ENCODE measurements at regions of chr11 and their contacts with region 1.

Region 1: DNA sequence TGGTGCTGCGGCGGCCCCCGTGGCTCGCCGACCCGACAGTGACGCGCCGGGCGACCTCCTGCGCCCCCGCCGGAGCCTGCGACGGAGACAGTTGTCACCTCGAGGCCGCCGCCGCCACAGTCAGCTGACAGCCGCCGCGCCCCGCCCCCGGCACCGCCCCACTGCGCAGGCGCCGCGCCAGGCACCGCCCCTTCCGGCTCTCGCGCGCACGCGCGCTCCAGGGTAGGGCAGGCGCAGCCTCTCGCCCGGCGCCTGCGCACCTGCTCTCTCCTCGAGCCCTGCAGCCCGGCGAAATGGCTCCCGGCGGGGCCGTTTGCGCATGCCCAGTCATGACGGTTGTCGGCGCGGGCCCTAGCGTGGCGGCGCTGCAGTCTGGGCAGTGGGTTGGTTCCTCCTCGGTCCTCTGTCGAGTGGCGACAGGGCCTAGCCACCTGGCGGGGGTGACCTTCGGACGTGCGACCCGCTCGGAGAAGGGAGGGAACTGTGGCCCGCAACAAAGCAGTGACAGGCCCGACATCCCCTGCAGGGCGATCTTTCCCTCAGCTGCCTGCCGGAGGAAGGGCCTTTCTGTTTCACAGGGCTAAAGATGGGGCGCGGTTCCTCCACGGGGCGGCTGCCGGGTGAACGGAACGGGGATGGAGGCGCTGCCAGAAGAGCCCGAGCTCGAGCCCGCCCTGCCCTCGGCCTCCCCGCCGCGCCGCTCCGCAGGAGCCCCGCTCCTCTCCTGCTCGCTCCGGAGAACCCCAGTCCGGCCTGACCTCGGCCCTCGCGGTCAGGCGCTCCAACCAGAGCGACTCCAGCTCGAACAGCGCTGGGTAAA is at the start of gene TOLLIP:
- DNase-seq: peak; percentile 94 to 100 (median 99)
- ATAC-seq: peak; percentile 86
- H3K4me3 ChIP-seq: peak within 1 kb of the TSS; percentile 76
- H3K4me3 Mint-ChIP-seq: peak within 1 kb of the TSS; percentile 80 to 92 (median 88)
- H3K27ac ChIP-seq: peak within 1 kb of the TSS; percentile 86
- H3K27ac Mint-ChIP-seq: peak within 1 kb of the TSS; percentile 87 to 97 (median 94)
- H3K4me1 ChIP-seq: peaks cover 31 to 35% of the 10 kb centered on the region in 2 donors
- H3K4me1 Mint-ChIP-seq: peaks cover 32 to 55% (median 43%) of the 10 kb centered on the region in 7 donors
- H3K27me3 ChIP-seq: no peaks in the 10 kb centered on the region
- H3K27me3 Mint-ChIP-seq: peaks cover 0 to 24% (median 0%) of the 10 kb centered on the region in 5 donors
- total RNA-seq, gene TOLLIP: 39.8 to 63.8 (median 48.7) TPM

Region 2: DNA sequence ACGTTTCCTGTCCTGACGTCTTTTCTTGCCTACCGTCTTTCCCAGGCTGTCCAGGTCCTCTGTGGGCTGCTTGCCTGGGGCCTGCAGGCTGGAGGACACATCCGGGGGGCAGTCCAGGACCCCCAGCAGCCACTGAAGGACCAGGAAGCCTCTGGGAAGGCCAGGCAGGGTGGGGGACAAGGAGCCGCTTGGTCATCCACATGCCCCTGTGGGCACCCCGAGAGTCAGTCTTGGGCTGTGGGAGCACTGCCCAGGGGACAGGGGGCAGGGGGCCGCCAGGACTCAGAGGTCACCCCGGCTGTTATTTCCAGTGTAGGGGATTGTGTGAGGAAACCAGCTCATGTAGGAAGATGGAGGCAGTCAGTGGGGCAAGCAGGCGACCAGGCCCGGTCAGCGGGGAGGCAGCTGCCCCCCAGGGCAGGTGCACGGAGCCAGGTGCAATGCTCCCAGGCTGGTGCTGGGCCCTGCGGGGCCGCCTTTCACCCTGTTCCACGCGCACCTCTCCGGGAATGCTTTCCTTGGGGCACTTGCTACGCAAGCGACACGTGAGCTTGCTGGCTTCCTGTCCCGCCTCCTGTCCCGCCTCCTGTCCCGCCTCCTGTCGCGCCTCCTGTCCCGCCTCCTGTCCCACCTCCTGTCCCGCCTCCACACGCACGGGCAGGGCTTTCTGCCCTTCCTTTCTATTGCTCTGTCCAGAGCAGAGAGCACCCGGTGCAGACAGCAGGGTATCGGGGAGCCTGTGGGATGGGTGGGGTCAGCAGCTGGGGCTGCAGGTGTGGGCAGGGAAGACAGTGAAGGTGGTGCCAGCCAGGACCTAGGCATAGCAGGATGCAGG is 47.3 kb before region 1 on chr11:
- CTCF ChIA-PET with region 1: no interaction called
- POLR2A ChIA-PET with region 1: interaction called, 13 read pairs
- intact Hi-C with region 1: loop called (anchors 1 kb)
- DNase-seq: peak; percentile 72 to 91 (median 84)
- ATAC-seq: peak; percentile 93
- H3K4me3 ChIP-seq: peak overlapping the region; percentile 77
- H3K4me3 Mint-ChIP-seq: peak overlapping the region; percentile 74 to 90 (median 85)
- H3K27ac ChIP-seq: peak overlapping the region; percentile 89
- H3K27ac Mint-ChIP-seq: peak overlapping the region; percentile 78 to 95 (median 91)
- H3K4me1 ChIP-seq: peaks cover 13 to 15% of the 10 kb centered on the region in 2 donors
- H3K4me1 Mint-ChIP-seq: peaks cover 0 to 34% (median 12%) of the 10 kb centered on the region in 7 donors
- H3K27me3 ChIP-seq: no peaks in the 10 kb centered on the region
- H3K27me3 Mint-ChIP-seq: no peaks in the 10 kb centered on the region

Region 3: DNA sequence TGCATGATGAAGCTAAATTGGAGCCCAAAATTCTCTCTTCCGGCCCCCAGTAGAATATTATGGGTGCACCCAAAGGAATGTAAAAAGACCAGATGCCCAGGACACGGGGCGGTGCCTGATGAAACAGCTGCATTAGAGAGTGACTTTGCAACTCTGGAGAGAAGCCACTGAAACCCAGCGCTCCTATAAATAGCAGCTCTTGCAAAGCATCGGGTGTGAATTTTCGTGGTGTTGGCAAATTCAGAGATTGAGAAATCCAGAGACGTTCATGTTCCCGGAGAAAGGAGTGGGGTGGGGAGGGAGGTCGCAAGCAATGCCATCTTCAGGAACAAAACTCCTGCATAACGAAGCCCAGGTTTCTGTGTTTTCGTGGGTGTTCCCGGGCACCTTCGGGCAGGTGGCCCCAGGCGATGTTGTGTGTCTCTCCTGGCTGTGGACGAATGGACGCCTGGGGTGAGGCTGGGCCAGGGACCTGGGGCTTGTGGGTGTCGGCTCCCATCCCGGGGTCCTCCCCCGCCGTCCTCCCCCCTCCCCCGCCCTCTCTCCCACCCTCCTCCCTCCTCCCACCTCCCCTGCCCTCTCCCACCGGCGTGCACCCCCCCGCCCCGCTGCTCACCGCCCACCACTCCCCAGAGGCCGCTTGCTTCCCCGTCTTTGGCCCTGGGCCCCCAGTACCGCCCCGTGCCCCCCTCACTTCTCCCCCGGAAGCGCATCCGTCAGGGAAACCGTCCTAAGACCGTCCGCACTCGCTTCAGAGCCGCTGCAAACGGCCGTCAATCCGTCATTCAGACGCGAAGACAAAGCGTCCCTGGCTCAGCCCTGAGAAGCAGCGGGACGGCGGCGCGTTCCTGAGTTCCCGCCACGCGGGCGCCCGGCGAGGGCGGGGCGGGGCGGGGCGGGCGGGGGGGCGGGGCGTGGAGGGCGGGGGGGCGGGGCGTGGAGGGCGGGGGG is 26.4 kb after region 1 on chr11:
- CTCF ChIA-PET with region 1: no interaction called
- POLR2A ChIA-PET with region 1: interaction called, 8 read pairs
- intact Hi-C with region 1: loop called (anchors 1 kb)
- DNase-seq: peak; percentile 40 to 64 (median 61)
- ATAC-seq: peak; percentile 73
- H3K4me3 ChIP-seq: peak overlapping the region; percentile 59
- H3K4me3 Mint-ChIP-seq: peak overlapping the region; percentile 76 to 89 (median 82)
- H3K27ac ChIP-seq: peak overlapping the region; percentile 45
- H3K27ac Mint-ChIP-seq: peak overlapping the region; percentile 40 to 89 (median 62)
- H3K4me1 ChIP-seq: peaks cover 10% of the 10 kb centered on the region in 2 donors
- H3K4me1 Mint-ChIP-seq: peaks cover 15 to 22% (median 17%) of the 10 kb centered on the region in 7 donors
- H3K27me3 ChIP-seq: no peaks in the 10 kb centered on the region
- H3K27me3 Mint-ChIP-seq: peaks cover 0 to 20% (median 0%) of the 10 kb centered on the region in 5 donors

Region 4: DNA sequence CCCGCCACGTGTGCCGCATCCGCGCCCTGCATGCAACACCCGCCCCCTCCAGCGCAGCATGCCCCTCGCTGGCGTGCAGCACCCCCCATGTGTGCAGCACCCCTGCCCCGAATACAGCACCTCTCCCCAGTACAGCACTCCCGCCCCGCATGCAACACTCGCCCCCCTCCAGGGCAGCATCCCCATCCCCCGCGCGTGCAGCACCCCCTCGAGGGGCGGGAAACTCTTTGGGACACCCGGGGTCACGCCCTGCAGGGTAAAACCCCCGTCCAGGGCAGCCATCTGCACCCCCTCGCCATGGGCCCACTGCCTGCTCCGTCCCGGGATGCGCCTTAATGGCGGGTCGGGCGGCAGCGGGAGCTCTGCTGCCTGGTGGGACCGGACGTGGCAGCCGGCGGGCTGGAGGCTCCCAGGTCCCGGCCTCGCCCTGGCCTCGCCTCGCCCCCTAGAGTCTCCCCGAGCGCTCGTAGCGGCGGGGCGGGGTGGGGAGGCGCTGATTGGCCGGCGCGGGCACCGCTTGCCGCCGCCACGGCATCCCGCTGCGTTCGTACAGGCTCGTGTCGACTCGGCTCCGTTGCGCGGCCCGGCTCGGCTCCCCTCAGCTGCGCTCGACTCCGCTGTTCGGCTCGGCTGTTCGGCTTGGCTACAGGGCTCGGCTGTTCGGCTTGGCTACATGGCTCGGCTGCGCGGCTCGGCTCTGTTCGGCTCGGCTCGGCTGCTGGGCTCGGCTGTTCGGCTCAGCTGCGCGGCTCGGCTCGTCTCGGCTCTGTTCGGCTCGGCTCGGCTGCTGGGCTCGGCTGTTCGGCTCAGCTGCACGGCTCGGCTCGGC is 79.6 kb after region 1 on chr11:
- CTCF ChIA-PET with region 1: interaction called, 3 read pairs
- POLR2A ChIA-PET with region 1: interaction called, 3 read pairs
- intact Hi-C with region 1: loop called (anchors 1 kb)
- DNase-seq: peak; percentile 92 to 98 (median 98)
- ATAC-seq: peak; percentile 97
- H3K4me3 ChIP-seq: peak overlapping the region; percentile 64
- H3K4me3 Mint-ChIP-seq: peak overlapping the region; percentile 62 to 86 (median 76)
- H3K27ac ChIP-seq: peak overlapping the region; percentile 60
- H3K27ac Mint-ChIP-seq: peak overlapping the region in 3 of 9 donors; percentile 19 to 76 (median 55)
- H3K4me1 ChIP-seq: peaks cover 7 to 8% of the 10 kb centered on the region in 2 donors
- H3K4me1 Mint-ChIP-seq: peaks cover 0 to 15% (median 10%) of the 10 kb centered on the region in 7 donors
- H3K27me3 ChIP-seq: no peaks in the 10 kb centered on the region
- H3K27me3 Mint-ChIP-seq: peaks cover 23 to 55% (median 26%) of the 10 kb centered on the region in 5 donors

Measured in naive thymus-derived CD4-positive, alpha-beta T cell (primary cell).